MCF 10A (cell line): ENCODE measurements at regions of chr17 and their contacts with region 1.

Region 1: GRCh38 chr17:8248751-8249607 is at the start of gene PFAS:
- DNase-seq: peak; percentile 92
- H3K4me3 Mint-ChIP-seq: peak within 1 kb of the TSS; percentile 98
- H3K27ac Mint-ChIP-seq: peak within 1 kb of the TSS; percentile 97
- H3K4me1 Mint-ChIP-seq: peaks cover 15% of the 10 kb centered on the region
- H3K27me3 Mint-ChIP-seq: no peaks in the 10 kb centered on the region
- CTCF ChIP-seq: no peak
- total RNA-seq, gene PFAS: 54.4 and 66.2 TPM in 2 replicates

Region 2: GRCh38 chr17:8156246-8156992 is 92.6 kb before region 1 on chr17:
- CTCF ChIA-PET with region 1: interaction called, 4 read pairs
- POLR2A ChIA-PET with region 1: interaction called, 50 read pairs
- intact Hi-C with region 1: no loop called
- DNase-seq: peak; percentile 100
- H3K4me3 Mint-ChIP-seq: no peak overlapping the region
- H3K27ac Mint-ChIP-seq: no peak overlapping the region
- H3K4me1 Mint-ChIP-seq: peaks cover 38% of the 10 kb centered on the region
- H3K27me3 Mint-ChIP-seq: no peaks in the 10 kb centered on the region
- CTCF ChIP-seq: no peak

Region 3: DNA sequence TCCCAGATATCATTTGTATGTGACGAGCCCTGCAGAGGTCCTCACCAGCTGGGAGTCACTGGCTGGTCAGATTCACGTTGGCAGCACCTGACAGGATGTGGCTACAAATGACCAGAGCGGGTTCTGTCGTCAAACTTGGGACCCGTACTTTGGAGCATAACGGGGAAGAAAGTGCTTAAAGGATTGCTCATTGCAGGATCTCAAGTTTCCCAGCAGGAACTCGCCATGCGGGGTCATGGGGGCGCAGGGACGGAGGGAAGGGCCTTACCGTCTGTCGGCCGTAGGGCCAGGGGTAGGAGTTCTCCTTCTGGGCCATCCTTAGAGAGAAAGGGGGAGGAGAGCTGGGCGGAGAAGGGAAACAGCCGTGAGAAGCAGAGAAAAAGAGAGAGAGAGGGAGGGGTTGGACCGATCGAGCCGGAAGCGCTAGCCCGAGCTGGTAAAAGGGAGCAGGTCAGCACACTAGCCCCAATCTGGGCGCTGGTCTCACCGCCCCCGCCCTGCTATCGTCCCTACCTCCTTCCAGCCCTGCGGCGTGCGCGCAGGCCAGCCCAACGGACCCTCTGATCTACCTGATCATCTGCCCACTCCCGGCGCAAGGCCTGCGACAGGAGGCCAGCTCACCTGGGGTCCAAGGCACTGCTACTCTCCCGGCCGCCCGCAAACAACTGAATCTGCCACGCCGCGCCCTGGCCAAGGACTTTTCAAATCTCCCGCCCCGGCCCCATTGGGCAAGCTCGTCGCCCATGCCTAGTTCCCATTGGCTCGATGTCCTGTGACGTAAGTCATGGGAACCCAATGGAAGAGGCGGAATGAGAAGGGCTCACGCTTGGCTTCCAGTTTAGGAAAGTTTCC is 38.8 kb before region 1 on chr17 and contains the start of gene AURKB:
- CTCF ChIA-PET with region 1: no interaction called
- POLR2A ChIA-PET with region 1: interaction called, 12 read pairs
- intact Hi-C with region 1: no loop called
- DNase-seq: peak; percentile 99
- H3K4me3 Mint-ChIP-seq: peak within 1 kb of the TSS; percentile 91
- H3K27ac Mint-ChIP-seq: peak within 1 kb of the TSS; percentile 91
- H3K4me1 Mint-ChIP-seq: peaks cover 6% of the 10 kb centered on the region
- H3K27me3 Mint-ChIP-seq: no peaks in the 10 kb centered on the region
- CTCF ChIP-seq: no peak
- total RNA-seq, gene AURKB: 11.7 and 33.6 TPM in 2 replicates

Region 4: DNA sequence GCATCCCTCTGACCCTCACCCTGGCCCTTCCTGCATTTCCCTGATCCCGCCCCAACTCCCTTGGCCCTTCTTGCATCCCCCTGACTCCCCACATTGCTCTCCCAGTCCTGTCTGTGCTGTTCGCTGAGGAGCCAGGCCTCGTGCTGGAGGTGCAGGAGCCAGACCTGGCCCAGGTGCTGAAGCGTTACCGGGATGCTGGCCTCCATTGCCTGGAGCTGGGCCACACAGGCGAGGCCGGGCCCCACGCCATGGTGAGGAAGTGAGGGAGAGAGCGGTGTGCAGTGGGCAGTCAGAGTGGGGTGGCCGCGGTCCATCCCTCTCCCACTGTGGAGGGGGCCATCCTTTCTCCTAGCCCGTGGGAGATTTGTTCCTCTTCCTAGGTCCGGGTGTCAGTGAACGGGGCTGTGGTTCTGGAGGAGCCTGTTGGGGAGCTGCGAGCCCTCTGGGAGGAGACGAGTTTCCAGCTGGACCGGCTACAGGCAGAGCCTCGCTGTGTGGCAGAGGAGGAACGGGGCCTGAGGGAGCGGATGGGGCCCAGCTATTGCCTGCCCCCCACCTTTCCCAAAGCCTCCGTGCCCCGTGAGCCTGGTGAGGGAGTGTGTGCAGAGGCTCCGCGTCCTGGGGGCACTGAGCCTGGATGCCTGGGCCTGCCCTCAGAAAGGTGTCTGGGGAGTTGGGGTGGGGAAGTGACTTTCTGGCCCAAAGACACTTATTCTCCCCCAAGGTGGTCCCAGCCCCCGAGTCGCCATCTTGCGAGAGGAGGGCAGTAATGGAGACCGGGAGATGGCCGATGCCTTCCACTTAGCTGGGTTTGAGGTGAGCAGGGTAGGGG is 17.9 kb after region 1 on chr17:
- CTCF ChIA-PET with region 1: no interaction called
- POLR2A ChIA-PET with region 1: no interaction called
- intact Hi-C with region 1: no loop called
- DNase-seq: no peak
- H3K4me3 Mint-ChIP-seq: no peak overlapping the region
- H3K27ac Mint-ChIP-seq: no peak overlapping the region
- H3K4me1 Mint-ChIP-seq: no peaks in the 10 kb centered on the region
- H3K27me3 Mint-ChIP-seq: no peaks in the 10 kb centered on the region
- CTCF ChIP-seq: no peak

Region 5: GRCh38 chr17:8288336-8289102 is 39.5 kb after region 1 on chr17 and contains the start of gene RANGRF:
- CTCF ChIA-PET with region 1: interaction called, 4 read pairs
- POLR2A ChIA-PET with region 1: interaction called, 34 read pairs
- intact Hi-C with region 1: no loop called
- DNase-seq: peak; percentile 85
- H3K4me3 Mint-ChIP-seq: peak within 1 kb of the TSS; percentile 90
- H3K27ac Mint-ChIP-seq: peak within 1 kb of the TSS; percentile 88
- H3K4me1 Mint-ChIP-seq: peaks cover 10% of the 10 kb centered on the region
- H3K27me3 Mint-ChIP-seq: no peaks in the 10 kb centered on the region
- CTCF ChIP-seq: no peak
- total RNA-seq, gene RANGRF: 38.6 and 41.8 TPM in 2 replicates

Region 6: DNA sequence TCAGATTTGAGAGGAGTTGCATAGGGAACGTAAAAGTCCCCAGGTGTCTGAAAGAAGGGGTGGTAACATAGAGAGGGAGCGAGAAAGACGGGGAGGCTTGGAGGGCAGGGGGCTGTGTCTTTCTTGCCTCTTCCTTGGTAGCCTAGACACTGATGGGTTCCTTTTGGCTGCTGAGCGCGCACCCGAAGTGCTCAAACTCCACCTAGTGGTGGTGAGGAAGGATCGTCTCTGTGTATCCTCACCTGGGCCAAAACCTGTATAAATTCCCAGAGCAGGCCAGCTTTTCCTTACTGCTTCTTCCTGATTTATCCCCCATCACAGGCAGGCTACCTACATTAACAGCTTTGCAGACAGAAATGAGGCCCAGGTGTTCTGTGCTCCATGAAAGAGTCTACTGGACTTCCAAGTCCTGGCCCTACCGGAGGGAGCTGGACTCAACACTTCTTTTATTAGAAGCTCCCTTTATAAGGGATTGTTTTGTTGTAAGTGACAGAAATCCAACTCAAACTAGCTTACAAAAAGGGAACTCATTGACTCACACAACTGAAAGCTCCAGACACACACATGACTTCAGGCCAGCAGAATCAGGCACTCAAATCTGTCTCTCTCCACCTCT is 51.8 kb after region 1 on chr17:
- CTCF ChIA-PET with region 1: interaction called, 9 read pairs
- POLR2A ChIA-PET with region 1: interaction called, 52 read pairs
- intact Hi-C with region 1: loop called (anchors 2 kb)
- DNase-seq: peak; percentile 77
- H3K4me3 Mint-ChIP-seq: no peak overlapping the region
- H3K27ac Mint-ChIP-seq: no peak overlapping the region
- H3K4me1 Mint-ChIP-seq: peaks cover 13% of the 10 kb centered on the region
- H3K27me3 Mint-ChIP-seq: no peaks in the 10 kb centered on the region
- CTCF ChIP-seq: peak; percentile 72